Activated T-helper 2 cell treated with anti-CD3 and anti-CD28 coated beads, Interferon-gamma antibody, Interleukin-2, Interleukin-4, amounts not matched to agents 10 μg/mL and 5 μg/mL and 100 μg/mL, durations not matched to agents 14 hours and 24 hours and 36 hours (primary cell): ENCODE measurements at regions of chr7 and their contacts with region 1.

Region 1: DNA sequence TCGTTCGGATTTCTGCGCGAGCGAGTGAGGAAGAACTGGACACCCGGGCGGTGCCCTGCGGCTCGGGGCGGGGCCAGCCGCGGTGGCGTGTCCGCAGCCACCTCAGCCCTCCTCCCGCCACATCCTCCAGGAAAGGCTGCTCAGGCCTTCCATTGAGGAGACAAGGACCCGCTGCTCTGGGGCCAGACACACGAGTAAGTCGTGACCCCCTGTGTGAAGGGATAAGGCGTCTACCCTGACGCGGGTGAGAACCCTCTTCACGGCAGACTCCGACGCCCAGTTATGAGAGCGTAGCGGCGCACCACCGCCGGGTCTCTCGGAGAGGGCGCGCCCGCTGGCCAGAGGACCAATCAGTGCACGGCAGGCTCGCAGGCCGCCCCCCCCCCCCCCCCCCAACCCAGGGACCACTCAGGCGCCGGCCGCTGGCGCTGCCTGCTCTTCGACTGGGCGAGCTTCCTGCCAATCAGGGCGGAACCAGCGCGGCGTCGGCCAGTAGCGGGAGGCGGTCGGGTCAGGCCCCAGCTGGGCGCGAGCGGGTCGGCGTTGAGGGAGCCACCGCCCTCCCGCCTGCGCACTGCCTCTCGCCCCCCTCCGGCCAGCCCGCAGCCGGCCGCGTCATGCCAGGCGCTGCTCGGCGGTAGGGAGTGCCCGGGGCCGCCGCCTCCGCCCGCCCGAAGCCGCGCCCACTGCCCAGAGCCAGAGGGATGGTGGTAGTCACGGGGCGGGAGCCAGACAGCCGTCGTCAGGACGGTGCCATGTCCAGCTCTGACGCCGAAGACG is at the start of gene KCTD7:
- DNase-seq: peak; percentile 94
- H3K4me3 Mint-ChIP-seq: peak within 1 kb of the TSS; percentile 87
- H3K27ac Mint-ChIP-seq: peak within 1 kb of the TSS; percentile 84
- H3K4me1 Mint-ChIP-seq: peaks cover 38% of the 10 kb centered on the region
- H3K27me3 Mint-ChIP-seq: no peaks in the 10 kb centered on the region
- total RNA-seq, gene KCTD7: 10.3 and 12.0 TPM in 2 replicates

Region 2: GRCh38 chr7:66493235-66494181 is 135.0 kb before region 1 on chr7:
- intact Hi-C with region 1: loop called (anchors 10 kb)
- DNase-seq: peak; percentile 95
- H3K4me3 Mint-ChIP-seq: peak overlapping the region; percentile 86
- H3K27ac Mint-ChIP-seq: peak overlapping the region; percentile 93
- H3K4me1 Mint-ChIP-seq: peaks cover 10% of the 10 kb centered on the region
- H3K27me3 Mint-ChIP-seq: no peaks in the 10 kb centered on the region

Region 3: GRCh38 chr7:66591799-66592596 is 36.6 kb before region 1 on chr7:
- intact Hi-C with region 1: loop called (anchors 1 kb)
- DNase-seq: peak; percentile 85
- H3K4me3 Mint-ChIP-seq: peak overlapping the region; percentile 96
- H3K27ac Mint-ChIP-seq: peak overlapping the region; percentile 85
- H3K4me1 Mint-ChIP-seq: peaks cover 30% of the 10 kb centered on the region
- H3K27me3 Mint-ChIP-seq: no peaks in the 10 kb centered on the region

Region 4: DNA sequence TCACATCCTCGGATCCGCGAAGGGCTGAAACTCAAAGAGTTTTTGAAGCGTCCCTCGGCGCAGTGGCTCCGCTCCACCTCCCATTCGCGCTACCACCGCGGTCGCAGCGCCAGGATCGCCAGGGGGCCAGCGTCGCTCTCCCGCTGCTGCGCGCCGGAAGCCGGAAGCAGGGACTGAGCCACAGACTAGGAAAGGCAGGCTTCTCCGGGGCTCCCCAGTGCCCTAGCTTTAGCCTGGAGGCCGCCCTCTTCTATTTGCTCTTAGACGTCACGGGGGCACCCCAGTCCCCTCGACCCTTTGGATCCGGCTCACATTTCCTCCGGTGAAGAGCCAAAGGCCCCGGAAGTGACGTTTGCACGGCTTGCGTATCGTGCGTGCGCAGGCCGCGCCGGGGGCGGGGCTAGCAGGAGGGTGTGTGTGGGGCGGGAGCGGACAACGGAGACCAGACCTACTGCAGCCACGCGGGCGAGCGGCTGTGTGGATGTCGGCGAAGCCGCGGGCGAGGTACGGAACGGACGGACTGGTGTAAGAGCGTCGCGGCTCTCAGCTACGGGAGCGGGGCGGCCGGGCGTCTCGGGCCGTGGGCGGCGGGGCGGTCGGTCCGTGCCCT is 25.7 kb after region 1 on chr7:
- intact Hi-C with region 1: loop called (anchors 1 kb)
- DNase-seq: peak; percentile 96
- H3K4me3 Mint-ChIP-seq: peak overlapping the region; percentile 95
- H3K27ac Mint-ChIP-seq: peak overlapping the region; percentile 94
- H3K4me1 Mint-ChIP-seq: peaks cover 14% of the 10 kb centered on the region
- H3K27me3 Mint-ChIP-seq: no peaks in the 10 kb centered on the region

Region 5: DNA sequence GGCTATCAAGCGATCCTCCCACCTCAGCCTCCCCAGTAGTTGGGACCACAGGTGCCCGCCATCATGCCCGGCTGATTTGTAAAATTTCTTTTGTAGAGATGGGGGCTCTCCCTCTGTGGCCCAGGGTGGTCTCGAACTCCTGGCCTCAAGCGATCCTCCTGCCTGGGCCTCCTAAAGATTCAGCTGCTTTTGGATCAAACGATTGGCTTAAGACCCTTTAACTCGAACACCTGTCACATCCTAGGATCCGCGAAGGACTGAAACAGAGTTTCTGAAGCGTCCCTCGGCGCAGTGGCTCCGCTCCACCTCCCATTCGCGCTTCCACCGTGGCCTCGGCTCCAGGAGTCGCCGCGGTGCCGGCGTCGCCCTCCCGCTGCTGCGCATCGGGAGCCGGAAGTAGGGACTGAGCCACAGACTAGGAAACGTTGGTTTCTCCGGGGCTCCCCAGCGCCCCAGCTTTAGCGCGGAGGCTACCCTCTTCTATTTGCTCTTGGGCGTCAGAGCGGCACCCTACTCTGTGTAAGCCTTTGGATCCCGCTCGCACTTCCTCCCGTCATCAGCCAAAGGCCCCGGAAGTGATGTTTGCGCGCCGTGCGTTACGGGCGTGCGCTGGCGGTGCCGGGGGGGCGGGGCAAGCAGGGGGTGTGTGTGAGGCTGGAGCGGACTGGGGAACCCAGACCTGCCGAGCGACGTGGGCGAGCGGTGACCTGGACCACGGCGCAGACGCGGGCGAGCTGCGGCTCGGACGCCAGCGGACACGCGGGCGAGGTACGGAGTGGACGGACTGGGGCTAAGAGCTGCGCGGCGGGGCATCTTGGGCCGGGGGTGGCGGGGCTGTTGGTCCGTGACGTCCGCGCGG is 53.2 kb after region 1 on chr7:
- intact Hi-C with region 1: loop called (anchors 2 kb)
- DNase-seq: peak; percentile 91
- H3K4me3 Mint-ChIP-seq: peak overlapping the region; percentile 90
- H3K27ac Mint-ChIP-seq: peak overlapping the region; percentile 93
- H3K4me1 Mint-ChIP-seq: peaks cover 15% of the 10 kb centered on the region
- H3K27me3 Mint-ChIP-seq: no peaks in the 10 kb centered on the region

Region 6: GRCh38 chr7:66740302-66740979 is 111.9 kb after region 1 on chr7 and contains the start of gene RABGEF1:
- intact Hi-C with region 1: loop called (anchors 2 kb)
- DNase-seq: peak; percentile 95
- H3K4me3 Mint-ChIP-seq: peak within 1 kb of the TSS; percentile 94
- H3K27ac Mint-ChIP-seq: peak within 1 kb of the TSS; percentile 94
- H3K4me1 Mint-ChIP-seq: peaks cover 14% of the 10 kb centered on the region
- H3K27me3 Mint-ChIP-seq: no peaks in the 10 kb centered on the region
- total RNA-seq, gene RABGEF1: 24.5 and 26.3 TPM in 2 replicates